Dorsolateral prefrontal cortex (tissue), 120 donors: ENCODE measurements at regions of chr6 and their contacts with region 1.

Region 1: GRCh38 chr6:168884646-168885086 is 369.0 kb downstream of the THBS2 start:
- DNase-seq: peak in 9 of 10 donors; percentile 15 to 85 (median 65)
- H3K4me3 ChIP-seq: peak overlapping the region in 43 of 59 donors; percentile 4 to 57 (median 39)
- H3K27ac ChIP-seq: peak overlapping the region in 1 of 59 donors; percentile 28
- H3K27me3 ChIP-seq: peaks cover 0 to 13% (median 0%) of the 10 kb centered on the region in 45 donors
- CTCF ChIP-seq: peak; percentile 70 to 100 (median 97)

Region 2: GRCh38 chr6:168157272-168158007 is 727.2 kb before region 1 on chr6:
- intact Hi-C with region 1: loop called in 1 of 2 experiments (anchors 5 kb)
- DNase-seq: no peak
- H3K4me3 ChIP-seq: peak overlapping the region in 5 of 59 donors; percentile 10 to 36 (median 20)
- H3K27ac ChIP-seq: peak overlapping the region in 1 of 59 donors; percentile 8
- H3K27me3 ChIP-seq: peaks cover 0 to 14% (median 0%) of the 10 kb centered on the region in 45 donors
- CTCF ChIP-seq: no peak

Region 3: DNA sequence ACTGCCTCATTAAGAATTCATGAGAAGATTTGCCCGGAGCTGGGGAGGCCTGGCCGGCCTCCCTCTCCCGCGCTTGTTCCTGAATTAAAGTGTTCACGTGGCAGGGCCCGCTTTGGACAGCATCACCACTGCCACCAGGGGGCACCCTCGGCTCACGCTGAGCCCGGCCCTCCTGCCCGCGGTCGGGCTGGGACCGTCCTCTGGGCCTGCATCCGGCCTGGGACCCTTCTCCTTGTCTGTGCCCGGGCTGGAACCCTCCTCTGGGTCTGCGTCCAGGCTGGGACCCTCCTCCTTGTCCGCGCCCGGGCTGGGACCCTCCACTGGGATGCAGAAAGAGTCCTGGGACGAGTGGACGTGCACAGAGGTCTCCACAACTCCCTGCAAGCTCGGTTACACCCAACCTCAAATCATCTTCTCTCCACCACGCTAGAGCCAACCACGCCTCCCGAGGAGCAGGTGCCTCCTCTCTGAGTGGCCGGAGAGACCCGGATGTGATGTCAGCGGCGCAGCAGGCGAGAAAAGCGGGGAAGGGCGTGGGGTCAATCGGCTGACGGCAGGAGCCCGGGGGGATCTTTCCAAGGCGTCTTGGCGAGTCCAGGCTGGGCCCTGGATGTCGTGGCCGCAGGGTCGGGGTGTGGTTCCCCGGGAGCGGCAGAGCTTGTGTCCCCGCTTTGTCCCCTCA is 514.2 kb before region 1 on chr6:
- intact Hi-C with region 1: loop called (anchors 1 to 2 kb)
- DNase-seq: peak in 9 of 10 donors; percentile 14 to 77 (median 56)
- H3K4me3 ChIP-seq: no peak overlapping the region
- H3K27ac ChIP-seq: no peak overlapping the region
- H3K27me3 ChIP-seq: peaks cover 0 to 4% (median 0%) of the 10 kb centered on the region in 45 donors
- CTCF ChIP-seq: peak; percentile 43 to 87 (median 76)

Region 4: DNA sequence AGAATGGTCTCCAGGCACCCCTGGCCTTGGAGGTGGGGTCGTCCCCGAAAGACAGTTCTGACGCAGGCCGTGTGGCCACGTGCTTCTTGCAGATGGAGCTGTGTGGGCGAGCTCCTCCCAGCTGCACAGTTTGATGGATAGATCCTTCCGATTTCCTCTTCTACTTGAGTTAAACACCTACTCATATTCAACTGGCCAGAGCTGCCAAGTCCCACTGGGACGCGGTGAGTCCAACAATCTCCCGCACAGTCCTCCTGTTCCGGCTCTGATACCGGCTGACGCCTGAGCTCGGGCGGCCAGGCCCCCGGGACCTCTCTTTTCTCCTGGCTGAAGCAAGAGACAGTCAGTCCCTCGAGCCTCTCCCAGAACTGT is 507.2 kb before region 1 on chr6:
- intact Hi-C with region 1: loop called in 1 of 2 experiments (anchors 2 kb)
- DNase-seq: peak in 4 of 10 donors; percentile 27 to 64 (median 48)
- H3K4me3 ChIP-seq: peak overlapping the region in 21 of 59 donors; percentile 3 to 32 (median 16)
- H3K27ac ChIP-seq: peak overlapping the region in 4 of 59 donors; percentile 14 to 59 (median 34)
- H3K27me3 ChIP-seq: no peaks in the 10 kb centered on the region
- CTCF ChIP-seq: no peak

Region 5: DNA sequence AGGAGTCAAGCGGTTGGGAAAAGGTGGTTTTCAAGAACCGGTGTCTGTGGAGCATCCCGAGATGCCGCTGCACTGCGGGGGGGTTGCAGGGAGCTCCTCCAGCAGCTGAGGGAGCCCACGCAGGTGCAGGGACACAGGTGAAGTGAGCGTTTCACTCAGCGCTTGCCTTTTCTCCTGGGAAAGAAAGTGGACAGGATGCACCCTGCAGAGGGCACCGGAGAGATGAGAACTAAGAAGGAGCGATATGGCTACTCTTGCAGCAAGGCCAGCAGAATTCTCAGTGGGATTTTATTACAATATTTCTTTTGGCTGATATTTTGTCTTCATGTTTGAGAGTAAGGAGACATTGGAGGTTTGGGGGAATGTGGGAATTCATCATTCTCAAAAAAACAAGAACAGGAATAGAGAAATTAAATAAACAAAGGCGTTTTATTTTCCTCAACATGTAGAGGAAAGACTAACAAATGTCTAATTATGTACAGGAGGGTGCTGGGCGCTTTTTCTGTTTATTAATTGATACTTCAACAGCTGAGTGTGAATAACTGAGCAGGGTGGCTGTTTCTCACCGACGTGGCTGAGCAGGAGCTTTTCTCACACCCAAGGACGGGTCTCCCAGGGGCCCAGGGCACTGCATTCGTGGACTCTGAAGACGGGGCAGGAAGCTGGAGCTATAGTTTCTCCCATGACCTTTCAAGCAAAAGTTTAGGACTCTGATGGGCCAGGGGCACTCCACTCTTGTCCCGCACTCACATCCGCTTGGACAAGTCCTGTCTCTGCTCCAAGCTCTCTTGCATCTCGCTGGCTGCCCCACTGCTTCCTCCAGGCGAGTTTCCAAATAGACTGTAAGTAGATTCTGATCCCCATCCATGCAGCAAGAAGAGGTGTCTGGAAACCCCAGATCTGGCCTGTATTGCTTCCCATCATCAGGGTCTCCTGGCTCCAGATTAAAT is 267.6 kb before region 1 on chr6:
- intact Hi-C with region 1: loop called (anchors 2 to 10 kb)
- DNase-seq: peak in 2 of 10 donors; percentile 30 to 40
- H3K4me3 ChIP-seq: no peak overlapping the region
- H3K27ac ChIP-seq: peak overlapping the region in 1 of 59 donors; percentile 1
- H3K27me3 ChIP-seq: no peaks in the 10 kb centered on the region
- CTCF ChIP-seq: peak in 49 of 56 donors; percentile 12 to 65 (median 46)

Region 6: DNA sequence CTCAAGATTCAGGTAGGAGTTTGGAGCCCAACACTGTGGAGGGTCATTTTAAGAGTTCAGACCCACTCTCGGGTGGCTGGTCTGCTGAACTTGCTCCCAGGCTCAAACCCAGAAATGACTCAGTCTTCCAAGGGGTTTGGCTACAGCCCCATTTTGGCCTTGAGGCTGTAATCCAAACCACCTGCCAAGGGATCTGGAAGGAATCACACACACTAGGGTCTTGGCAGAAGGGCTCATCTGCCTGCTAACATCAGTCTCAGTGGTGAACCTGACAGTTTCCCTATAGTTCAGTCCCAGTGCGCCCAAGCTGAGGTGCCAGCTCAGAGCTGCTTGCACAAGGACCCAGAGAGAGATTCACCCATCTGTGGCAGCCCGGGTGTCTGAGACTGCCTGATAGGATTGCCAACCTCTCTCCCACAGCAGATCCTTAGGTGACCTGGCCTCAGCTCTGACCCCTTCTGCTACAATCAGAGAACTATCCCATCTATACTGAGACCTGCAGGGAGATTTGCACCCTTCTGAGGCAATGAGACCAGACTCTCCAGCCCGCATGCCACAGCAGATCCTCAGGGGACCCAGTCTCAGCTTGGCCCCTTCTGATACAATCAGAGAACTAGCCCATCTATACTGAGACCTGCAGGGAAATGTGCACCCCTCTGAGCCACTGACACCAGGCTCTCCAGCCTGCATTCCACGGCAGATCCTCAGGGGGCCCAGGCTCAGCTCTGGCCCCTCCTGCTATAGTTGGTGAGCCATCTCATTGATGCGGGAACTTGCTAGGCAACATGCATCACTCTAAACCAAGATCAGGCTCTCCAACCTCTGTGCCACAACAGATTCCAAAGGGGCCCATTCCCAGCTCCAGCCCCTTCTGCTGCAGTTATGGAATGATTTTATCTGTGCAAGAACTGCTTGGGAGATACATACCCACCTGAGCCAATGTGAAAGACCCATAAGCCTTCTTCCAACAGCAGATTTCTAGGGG is 320.8 kb after region 1 on chr6:
- intact Hi-C with region 1: no loop called
- DNase-seq: no peak
- H3K4me3 ChIP-seq: no peak overlapping the region
- H3K27ac ChIP-seq: no peak overlapping the region
- H3K27me3 ChIP-seq: peaks cover 0 to 4% (median 0%) of the 10 kb centered on the region in 45 donors
- CTCF ChIP-seq: no peak